Transverse colon (tissue), 4 donors: ENCODE measurements at regions of chr3 and their contacts with region 1.

Region 1: DNA sequence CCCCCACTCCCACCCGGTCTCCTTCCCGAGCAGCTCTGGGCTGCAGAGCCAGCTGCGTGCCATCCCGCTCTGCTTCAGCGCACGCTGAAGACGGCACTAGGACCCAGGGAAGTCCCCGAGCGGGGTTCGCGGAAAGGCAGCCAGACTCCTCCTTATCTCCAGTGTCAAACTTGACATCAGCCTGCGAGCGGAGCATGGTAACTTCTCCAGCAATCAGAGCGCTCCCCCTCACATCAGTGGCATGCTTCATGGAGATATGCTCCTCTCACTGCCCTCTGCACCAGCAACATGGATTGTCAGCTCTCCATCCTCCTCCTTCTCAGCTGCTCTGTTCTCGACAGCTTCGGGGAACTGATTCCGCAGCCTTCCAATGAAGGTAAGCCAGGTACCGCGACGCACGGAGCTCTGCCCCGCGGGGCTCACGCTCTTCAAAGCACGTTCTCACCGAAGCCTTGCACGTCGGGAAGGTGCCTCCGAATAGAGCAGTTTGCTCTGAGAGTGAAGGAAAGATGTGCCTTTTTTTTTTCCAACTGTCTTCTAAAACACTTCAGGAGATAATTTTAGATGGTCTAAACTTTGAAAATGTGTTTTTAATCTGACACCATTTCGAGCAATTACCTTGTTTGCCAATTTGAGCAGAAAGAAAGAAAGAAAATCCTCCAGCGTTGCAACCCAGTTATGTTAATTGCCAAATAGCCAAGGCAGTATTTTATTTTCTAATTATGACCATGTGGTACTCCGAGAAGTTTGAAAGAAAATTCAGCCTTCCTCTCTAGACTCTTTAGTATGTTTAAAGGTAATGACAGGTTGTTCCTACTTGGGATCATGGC is at the start of gene EPHA3:
- DNase-seq: peak; percentile 52
- H3K4me3 ChIP-seq: peak within 1 kb of the TSS; percentile 9 to 40 (median 20)
- H3K27ac ChIP-seq: peak within 1 kb of the TSS in 1 of 4 donors; percentile 39
- H3K4me1 ChIP-seq: peaks cover 0 to 12% (median 6%) of the 10 kb centered on the region in 4 donors
- H3K27me3 ChIP-seq: peaks cover 53% of the 10 kb centered on the region
- CTCF ChIP-seq: no peak
- EP300 ChIP-seq: no peak
- POLR2A ChIP-seq: no peak
- total RNA-seq, gene EPHA3: 2.3 to 4.6 (median 2.4) TPM in 3 of 4 donors, not detected in the other

Region 2: DNA sequence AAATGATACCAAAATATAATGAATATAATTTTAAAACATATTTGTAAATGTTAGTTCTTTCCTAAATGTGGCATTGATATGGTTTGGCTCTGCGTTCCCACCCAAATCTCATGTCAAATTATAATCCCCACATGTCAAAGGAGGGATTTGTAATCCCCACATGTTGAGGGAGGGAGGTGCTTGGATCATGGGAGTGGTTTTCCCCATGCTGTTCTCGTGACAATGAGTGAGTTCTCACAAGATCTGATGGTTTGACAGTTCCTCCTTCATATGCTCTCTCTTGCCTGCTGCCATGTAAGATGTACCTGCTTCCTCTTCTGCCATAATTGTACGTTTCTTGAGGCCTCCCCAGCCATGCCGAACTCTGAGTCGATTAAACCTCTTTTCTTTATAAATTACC is 1060.9 kb before region 1 on chr3:
- in situ Hi-C with region 1: no loop called
- intact Hi-C with region 1: no loop called
- DNase-seq: no peak
- H3K4me3 ChIP-seq: no peak overlapping the region
- H3K27ac ChIP-seq: no peak overlapping the region
- H3K4me1 ChIP-seq: no peaks in the 10 kb centered on the region
- H3K27me3 ChIP-seq: no peaks in the 10 kb centered on the region
- CTCF ChIP-seq: no peak
- EP300 ChIP-seq: no peak
- POLR2A ChIP-seq: no peak

Region 3: GRCh38 chr3:88219138-88219792 is 888.4 kb before region 1 on chr3:
- in situ Hi-C with region 1: loop called in 1 of 4 experiments (anchors 10 kb)
- intact Hi-C with region 1: no loop called
- DNase-seq: peak; percentile 39
- H3K4me3 ChIP-seq: no peak overlapping the region
- H3K27ac ChIP-seq: no peak overlapping the region
- H3K4me1 ChIP-seq: no peaks in the 10 kb centered on the region
- H3K27me3 ChIP-seq: no peaks in the 10 kb centered on the region
- CTCF ChIP-seq: peak; percentile 33 to 52 (median 49)
- EP300 ChIP-seq: no peak
- POLR2A ChIP-seq: no peak

Region 4: DNA sequence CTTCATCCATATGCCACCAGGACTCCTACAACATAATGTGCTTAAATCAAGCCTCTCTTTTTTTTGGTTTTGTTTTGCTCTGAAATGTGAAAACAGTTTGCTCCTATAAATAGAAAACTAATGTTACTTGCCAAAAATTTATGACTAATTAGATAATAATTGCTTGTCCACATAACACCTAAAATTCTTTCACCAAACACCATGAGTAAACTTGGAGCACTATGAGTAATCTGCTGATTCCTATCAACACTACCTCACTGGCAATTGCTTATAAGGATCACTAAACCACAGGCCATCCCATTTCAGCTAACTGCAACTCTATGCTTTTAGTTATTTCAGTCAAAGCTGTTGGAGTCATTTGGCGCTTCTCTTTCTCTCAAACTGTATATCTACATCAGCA is 252.5 kb after region 1 on chr3:
- in situ Hi-C with region 1: no loop called
- intact Hi-C with region 1: no loop called
- DNase-seq: no peak
- H3K4me3 ChIP-seq: no peak overlapping the region
- H3K27ac ChIP-seq: no peak overlapping the region
- H3K4me1 ChIP-seq: no peaks in the 10 kb centered on the region
- H3K27me3 ChIP-seq: no peaks in the 10 kb centered on the region
- CTCF ChIP-seq: no peak
- EP300 ChIP-seq: no peak
- POLR2A ChIP-seq: no peak